Activated T-helper 2 cell treated with anti-CD3 and anti-CD28 coated beads, Interferon-gamma antibody, Interleukin-2, Interleukin-4, amounts not matched to agents 10 μg/mL and 5 μg/mL and 100 μg/mL, durations not matched to agents 14 hours and 24 hours and 36 hours (primary cell): ENCODE measurements at regions of chr11 and their contacts with region 1.

Region 1: GRCh38 chr11:107565219-107565937 is at the start of gene ALKBH8:
- DNase-seq: peak; percentile 69
- H3K4me3 Mint-ChIP-seq: peak within 1 kb of the TSS; percentile 88
- H3K27ac Mint-ChIP-seq: peak within 1 kb of the TSS; percentile 92
- H3K4me1 Mint-ChIP-seq: peaks cover 49% of the 10 kb centered on the region
- H3K27me3 Mint-ChIP-seq: no peaks in the 10 kb centered on the region
- total RNA-seq, gene ALKBH8: 10.6 and 11.9 TPM in 2 replicates

Region 2: DNA sequence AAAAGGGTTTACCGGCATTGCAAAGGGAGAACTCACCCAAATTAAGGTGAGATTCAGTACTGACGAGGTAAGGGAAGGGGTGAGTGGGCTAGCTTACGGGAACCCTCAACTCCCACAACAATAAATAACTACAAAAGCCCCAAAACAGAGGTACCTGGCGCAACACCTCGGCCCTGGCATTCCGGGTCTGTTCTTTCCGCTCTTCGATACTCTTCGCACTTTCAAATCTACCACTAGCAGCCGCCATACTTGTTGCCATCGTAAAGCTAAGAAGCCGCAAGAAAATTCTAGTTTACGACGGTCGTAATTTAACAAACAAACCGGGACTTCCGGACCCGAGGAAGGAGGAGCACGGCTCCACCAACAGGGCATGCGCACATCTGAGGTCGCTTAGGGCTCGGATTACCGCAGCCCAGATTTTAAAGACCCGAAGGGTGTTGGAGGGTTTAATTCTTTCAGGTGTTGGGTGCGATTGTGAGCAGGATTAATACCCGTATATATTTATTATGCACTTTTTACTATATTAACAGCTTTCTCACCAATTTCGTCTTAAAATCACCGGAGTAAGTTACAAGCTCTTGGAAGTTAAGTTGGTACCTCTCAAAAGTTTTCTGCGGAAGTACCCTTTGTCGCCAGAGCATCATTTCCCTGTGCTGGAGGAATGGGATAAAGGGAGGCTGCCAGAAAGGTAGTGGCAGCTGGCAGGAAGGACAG is 107.7 kb before region 1 on chr11 and contains the start of gene CWF19L2:
- intact Hi-C with region 1: loop called (anchors 2 kb)
- DNase-seq: peak; percentile 86
- H3K4me3 Mint-ChIP-seq: peak within 1 kb of the TSS; percentile 93
- H3K27ac Mint-ChIP-seq: peak within 1 kb of the TSS; percentile 87
- H3K4me1 Mint-ChIP-seq: peaks cover 19% of the 10 kb centered on the region
- H3K27me3 Mint-ChIP-seq: no peaks in the 10 kb centered on the region
- total RNA-seq, gene CWF19L2: 14.6 and 14.8 TPM in 2 replicates

Region 3: DNA sequence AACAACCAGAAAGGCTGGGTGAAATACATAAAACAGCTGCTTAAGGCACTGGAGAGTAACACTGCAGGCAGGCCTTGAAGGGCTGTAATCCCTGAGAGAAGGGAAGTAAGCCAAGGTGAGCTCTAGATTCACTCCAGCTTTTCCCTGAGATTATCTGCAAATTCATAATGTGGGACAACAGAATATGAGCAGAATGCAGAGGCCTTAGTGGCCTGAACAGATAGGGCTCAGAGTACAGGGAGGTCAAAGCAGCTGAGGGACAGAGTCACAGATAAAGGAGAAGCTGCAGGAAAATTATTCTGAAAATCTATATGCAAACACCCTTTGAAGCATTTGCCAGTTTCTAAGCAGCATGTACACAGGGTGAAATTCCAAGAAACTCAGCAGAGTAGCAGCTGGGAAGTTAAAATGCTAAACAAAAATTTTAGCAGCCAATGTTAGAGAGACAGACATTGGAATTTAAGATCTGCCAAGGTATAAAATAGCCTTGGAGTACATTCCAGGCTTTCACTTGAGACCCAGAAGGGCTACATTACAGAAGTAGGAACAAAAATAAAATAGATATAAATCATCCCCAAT is 59.6 kb before region 1 on chr11:
- intact Hi-C with region 1: no loop called
- DNase-seq: no peak
- H3K4me3 Mint-ChIP-seq: no peak overlapping the region
- H3K27ac Mint-ChIP-seq: no peak overlapping the region
- H3K4me1 Mint-ChIP-seq: no peaks in the 10 kb centered on the region
- H3K27me3 Mint-ChIP-seq: no peaks in the 10 kb centered on the region

Region 4: DNA sequence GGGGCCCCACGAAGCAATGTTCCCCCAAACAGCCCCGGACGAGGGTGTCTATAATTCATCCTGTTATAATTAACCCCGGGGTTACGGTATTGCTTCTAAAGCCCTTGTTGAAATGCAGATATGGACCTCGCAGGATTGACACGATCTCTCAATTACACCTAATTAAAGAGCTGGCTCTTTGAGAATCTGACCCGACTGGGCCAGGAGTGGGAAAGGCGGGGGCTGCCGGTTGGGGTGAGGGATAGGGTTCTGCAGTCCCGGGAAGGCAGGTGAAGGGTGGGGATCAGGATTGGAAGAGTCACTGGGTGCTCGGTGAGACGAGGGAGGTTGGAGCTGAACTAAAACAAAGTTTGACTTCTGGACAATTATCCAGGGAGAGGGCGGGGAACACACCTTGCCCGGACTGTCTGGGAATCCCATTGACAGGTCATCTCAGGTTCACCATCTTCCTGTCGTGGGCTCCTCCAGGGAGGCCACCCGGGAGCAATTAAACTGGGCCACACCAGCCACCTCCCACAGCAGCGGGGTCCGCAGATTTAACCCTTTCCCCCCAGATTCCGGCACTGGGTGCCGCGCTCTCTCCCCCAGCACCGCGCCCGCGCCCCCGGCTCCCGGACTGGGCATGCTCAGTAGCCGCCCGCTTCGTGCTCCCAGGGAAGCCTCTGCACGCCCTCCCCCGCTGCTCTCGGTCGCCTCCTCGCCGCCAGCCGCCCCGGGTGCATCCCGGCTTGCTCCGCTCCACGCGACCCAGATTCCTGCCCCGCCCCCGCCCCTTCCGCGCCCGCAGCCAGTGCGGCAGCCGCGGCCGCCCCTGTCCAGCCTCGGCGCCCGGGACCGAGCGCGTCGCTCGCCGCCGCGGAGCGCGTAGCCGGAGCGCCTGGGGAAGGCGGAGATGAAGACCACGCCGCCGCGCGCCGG is 25.3 kb after region 1 on chr11 and contains the start of gene ELMOD1:
- intact Hi-C with region 1: loop called (anchors 2 kb)
- DNase-seq: peak; percentile 18
- H3K4me3 Mint-ChIP-seq: peak within 1 kb of the TSS; percentile 78
- H3K27ac Mint-ChIP-seq: no peak within 1 kb of the TSS
- H3K4me1 Mint-ChIP-seq: peaks cover 14% of the 10 kb centered on the region
- H3K27me3 Mint-ChIP-seq: peaks cover 89% of the 10 kb centered on the region
- total RNA-seq, gene ELMOD1: not detected in 2 replicates

Region 5: GRCh38 chr11:107769189-107769588 is 203.8 kb after region 1 on chr11:
- intact Hi-C with region 1: loop called (anchors 10 kb)
- DNase-seq: no peak
- H3K4me3 Mint-ChIP-seq: no peak overlapping the region
- H3K27ac Mint-ChIP-seq: no peak overlapping the region
- H3K4me1 Mint-ChIP-seq: peaks cover 16% of the 10 kb centered on the region
- H3K27me3 Mint-ChIP-seq: peaks cover 31% of the 10 kb centered on the region

Region 6: GRCh38 chr11:107858217-107859070 is 293.1 kb after region 1 on chr11 and contains the start of gene SLC35F2:
- intact Hi-C with region 1: loop called (anchors 5 kb)
- DNase-seq: peak; percentile 62
- H3K4me3 Mint-ChIP-seq: peak within 1 kb of the TSS; percentile 96
- H3K27ac Mint-ChIP-seq: peak within 1 kb of the TSS; percentile 89
- H3K4me1 Mint-ChIP-seq: peaks cover 20% of the 10 kb centered on the region
- H3K27me3 Mint-ChIP-seq: peaks cover 8% of the 10 kb centered on the region
- total RNA-seq, gene SLC35F2: 28.0 and 29.8 TPM in 2 replicates

Region 7: GRCh38 chr11:108467091-108467823 is 901.9 kb after region 1 on chr11 and contains the start of gene C11orf65:
- intact Hi-C with region 1: loop called (anchors 10 kb)
- DNase-seq: peak; percentile 94
- H3K4me3 Mint-ChIP-seq: peak within 1 kb of the TSS; percentile 96
- H3K27ac Mint-ChIP-seq: peak within 1 kb of the TSS; percentile 100
- H3K4me1 Mint-ChIP-seq: peaks cover 16% of the 10 kb centered on the region
- H3K27me3 Mint-ChIP-seq: no peaks in the 10 kb centered on the region
- total RNA-seq, gene C11orf65: 0.43 and 0.97 TPM in 2 replicates